ENCODE measurements at regions of chr9 and their contacts with region 1.

Region 1: GRCh38 chr9:35079426-35080341 is at the start of gene FANCG:
- DNase-seq: peak; percentile 73 to 79 (median 77)
- H3K4me3 ChIP-seq: peak within 1 kb of the TSS; percentile 91 to 95
- H3K4me3 Mint-ChIP-seq: peak within 1 kb of the TSS; percentile 92 to 97 (median 96)
- H3K27ac ChIP-seq: peak within 1 kb of the TSS; percentile 66
- H3K27ac Mint-ChIP-seq: peak within 1 kb of the TSS; percentile 83 to 95 (median 92)
- H3K4me1 ChIP-seq: peaks cover 14% of the 10 kb centered on the region
- H3K4me1 Mint-ChIP-seq: peaks cover 15 to 41% (median 19%) of the 10 kb centered on the region in 4 donors
- H3K27me3 ChIP-seq: no peaks in the 10 kb centered on the region
- H3K27me3 Mint-ChIP-seq: no peaks in the 10 kb centered on the region
- total RNA-seq, gene FANCG: 24.0 to 27.9 TPM

Region 2: DNA sequence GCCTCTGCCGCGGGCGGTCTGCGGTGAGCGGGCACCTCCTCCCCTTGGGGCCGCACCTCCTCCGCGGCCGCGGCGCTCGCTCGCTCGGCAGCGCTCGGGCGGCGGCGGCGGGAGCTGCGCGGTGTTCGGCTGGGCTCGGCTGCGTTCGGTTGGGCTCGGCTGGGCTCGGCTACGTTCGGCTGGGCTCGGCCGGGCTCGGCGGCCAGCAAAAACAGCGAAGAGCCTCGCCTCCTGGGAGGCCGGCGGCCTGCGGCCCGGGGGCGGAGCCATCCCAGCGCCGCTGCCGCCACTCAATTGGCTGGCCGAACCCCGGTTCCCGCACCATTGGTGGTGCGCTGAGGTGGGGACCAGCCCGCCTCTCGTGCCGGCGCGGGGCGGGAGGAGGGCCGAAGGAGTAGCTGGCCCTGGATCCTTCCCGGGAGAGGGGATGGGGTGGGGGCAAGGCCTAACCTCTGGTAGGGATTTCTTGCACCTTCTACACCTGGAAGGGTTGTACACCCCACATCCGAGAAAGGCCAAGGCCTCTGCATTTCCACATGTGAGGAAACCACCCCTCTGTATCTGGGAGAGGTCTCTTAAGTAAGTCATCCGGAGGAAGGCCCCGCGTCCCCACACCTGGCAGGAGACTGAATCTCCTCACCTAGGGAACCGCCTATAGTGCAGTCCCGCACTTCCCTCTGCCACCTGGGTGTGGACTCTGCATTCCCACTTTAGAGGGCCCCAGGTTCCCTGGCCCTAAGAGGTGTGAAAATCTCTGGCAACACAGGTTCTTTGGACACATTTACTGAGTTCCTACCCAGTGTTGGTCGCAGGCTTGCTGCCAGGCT is 556.5 kb before region 1 on chr9 and contains the start of gene ENHO:
- CTCF ChIA-PET with region 1: no interaction called
- POLR2A ChIA-PET with region 1: no interaction called
- intact Hi-C with region 1: no loop called
- DNase-seq: peak; percentile 85 to 96 (median 91)
- H3K4me3 ChIP-seq: peak within 1 kb of the TSS; percentile 29 to 58
- H3K4me3 Mint-ChIP-seq: peak within 1 kb of the TSS; percentile 54 to 89 (median 81)
- H3K27ac ChIP-seq: peak within 1 kb of the TSS; percentile 44
- H3K27ac Mint-ChIP-seq: peak within 1 kb of the TSS in 5 of 7 donors; percentile 50 to 85 (median 68)
- H3K4me1 ChIP-seq: peaks cover 12% of the 10 kb centered on the region
- H3K4me1 Mint-ChIP-seq: peaks cover 6 to 13% (median 8%) of the 10 kb centered on the region in 4 donors
- H3K27me3 ChIP-seq: no peaks in the 10 kb centered on the region
- H3K27me3 Mint-ChIP-seq: peaks cover 1 to 5% of the 10 kb centered on the region in 2 donors
- total RNA-seq, gene ENHO: not detected

Region 3: GRCh38 chr9:35051069-35051967 is 28.4 kb before region 1 on chr9:
- CTCF ChIA-PET with region 1: interaction called, 17 read pairs
- POLR2A ChIA-PET with region 1: interaction called, 3 read pairs
- intact Hi-C with region 1: no loop called
- DNase-seq: peak; percentile 28 to 51 (median 36)
- H3K4me3 ChIP-seq: no peak overlapping the region
- H3K4me3 Mint-ChIP-seq: no peak overlapping the region
- H3K27ac ChIP-seq: no peak overlapping the region
- H3K27ac Mint-ChIP-seq: no peak overlapping the region
- H3K4me1 ChIP-seq: no peaks in the 10 kb centered on the region
- H3K4me1 Mint-ChIP-seq: peaks cover 0 to 13% (median 5%) of the 10 kb centered on the region in 4 donors
- H3K27me3 ChIP-seq: no peaks in the 10 kb centered on the region
- H3K27me3 Mint-ChIP-seq: no peaks in the 10 kb centered on the region

Region 4: DNA sequence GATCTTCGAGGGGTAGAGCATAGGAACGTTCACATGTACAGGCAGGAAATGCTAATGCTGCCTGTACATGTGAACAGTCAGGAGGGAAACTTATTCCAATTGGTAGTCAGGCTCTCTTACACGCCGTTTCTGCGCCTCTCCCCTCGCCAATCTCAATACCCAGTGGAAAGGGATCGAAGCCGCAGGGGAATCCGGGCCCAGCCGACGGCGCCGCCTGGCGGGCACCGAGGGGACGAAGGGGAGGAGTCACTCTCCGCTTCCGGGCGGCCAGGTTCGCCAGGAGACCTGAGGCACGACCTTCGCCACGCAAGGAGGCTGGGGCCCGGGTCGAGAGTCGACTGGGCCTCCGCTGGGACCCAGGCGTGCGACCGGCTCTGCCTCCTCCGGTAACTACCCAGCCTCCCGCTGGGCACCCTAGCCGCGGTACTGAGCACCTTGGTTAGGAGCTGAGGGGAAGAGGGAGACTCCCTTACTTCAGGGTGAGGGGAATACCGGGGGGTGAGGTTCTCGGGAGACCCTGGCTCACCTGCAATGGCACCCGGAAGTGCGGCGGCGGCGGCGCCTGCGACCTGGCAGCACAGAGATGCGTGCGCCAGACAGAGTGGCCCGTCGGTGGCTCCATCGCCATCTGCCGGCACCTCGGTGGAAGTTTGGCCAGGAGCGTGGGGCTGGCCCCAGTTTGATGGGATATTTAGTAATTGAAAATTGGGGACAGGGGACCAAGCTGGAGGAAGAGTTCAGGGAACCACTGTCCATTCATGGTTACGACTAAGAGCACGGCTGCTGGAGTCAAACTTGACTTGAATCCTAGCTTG is 16.6 kb after region 1 on chr9 and contains the start of gene PIGO:
- CTCF ChIA-PET with region 1: interaction called, 111 read pairs
- POLR2A ChIA-PET with region 1: interaction called, 102 read pairs
- intact Hi-C with region 1: loop called (anchors 1 kb)
- DNase-seq: peak; percentile 89 to 92 (median 92)
- H3K4me3 ChIP-seq: peak within 1 kb of the TSS; percentile 87
- H3K4me3 Mint-ChIP-seq: peak within 1 kb of the TSS; percentile 85 to 91 (median 86)
- H3K27ac ChIP-seq: peak within 1 kb of the TSS; percentile 92
- H3K27ac Mint-ChIP-seq: peak within 1 kb of the TSS; percentile 91 to 99 (median 94)
- H3K4me1 ChIP-seq: peaks cover 15% of the 10 kb centered on the region
- H3K4me1 Mint-ChIP-seq: peaks cover 17 to 60% (median 34%) of the 10 kb centered on the region in 4 donors
- H3K27me3 ChIP-seq: no peaks in the 10 kb centered on the region
- H3K27me3 Mint-ChIP-seq: no peaks in the 10 kb centered on the region
- total RNA-seq, gene PIGO: 23.4 to 29.7 TPM

Region 5: DNA sequence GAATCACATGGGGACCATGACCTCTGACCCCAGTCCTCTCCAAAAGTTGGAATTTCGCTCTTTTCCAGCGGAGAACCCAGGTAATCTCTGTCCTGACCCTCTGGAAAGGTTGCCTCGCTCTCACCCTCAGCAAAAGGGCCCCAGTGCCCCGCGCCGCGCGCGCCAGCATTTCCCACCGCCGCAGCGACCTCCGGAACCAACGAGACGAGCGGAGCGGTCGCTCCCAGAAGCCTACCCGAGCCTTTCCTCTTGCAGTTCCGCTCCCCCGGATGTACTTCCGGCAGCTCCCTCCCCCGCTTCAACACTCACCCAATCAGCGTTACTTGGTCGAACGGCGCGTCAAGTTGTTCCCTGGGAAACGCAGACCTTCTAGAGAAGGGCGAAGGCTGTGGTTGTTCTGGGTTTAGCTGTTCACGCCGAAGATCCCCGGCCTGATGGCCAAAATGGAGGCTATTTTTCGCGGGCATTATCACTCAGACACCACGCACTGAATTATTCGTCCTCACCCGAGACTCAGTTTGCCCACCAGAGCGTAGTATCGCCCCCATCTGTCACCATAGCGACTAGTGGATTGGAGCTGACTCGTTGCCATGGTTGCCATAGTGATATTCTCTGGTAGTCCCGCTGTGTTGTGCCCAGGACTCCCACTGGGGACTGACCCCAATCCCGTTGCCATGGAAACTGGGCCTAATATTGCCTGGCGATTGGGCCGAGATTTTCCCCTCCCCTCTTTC is 23.4 kb after region 1 on chr9 and contains the start of gene STOML2:
- CTCF ChIA-PET with region 1: interaction called, 111 read pairs
- POLR2A ChIA-PET with region 1: interaction called, 38 read pairs
- intact Hi-C with region 1: loop called (anchors 1 kb)
- DNase-seq: peak; percentile 91 to 96 (median 93)
- H3K4me3 ChIP-seq: peak within 1 kb of the TSS; percentile 83 to 96
- H3K4me3 Mint-ChIP-seq: peak within 1 kb of the TSS; percentile 90 to 98 (median 94)
- H3K27ac ChIP-seq: peak within 1 kb of the TSS; percentile 95
- H3K27ac Mint-ChIP-seq: peak within 1 kb of the TSS; percentile 97 to 100 (median 99)
- H3K4me1 ChIP-seq: peaks cover 23% of the 10 kb centered on the region
- H3K4me1 Mint-ChIP-seq: peaks cover 19 to 46% (median 30%) of the 10 kb centered on the region in 4 donors
- H3K27me3 ChIP-seq: no peaks in the 10 kb centered on the region
- H3K27me3 Mint-ChIP-seq: no peaks in the 10 kb centered on the region
- total RNA-seq, gene STOML2: 42.9 to 45.3 TPM

Region 6: DNA sequence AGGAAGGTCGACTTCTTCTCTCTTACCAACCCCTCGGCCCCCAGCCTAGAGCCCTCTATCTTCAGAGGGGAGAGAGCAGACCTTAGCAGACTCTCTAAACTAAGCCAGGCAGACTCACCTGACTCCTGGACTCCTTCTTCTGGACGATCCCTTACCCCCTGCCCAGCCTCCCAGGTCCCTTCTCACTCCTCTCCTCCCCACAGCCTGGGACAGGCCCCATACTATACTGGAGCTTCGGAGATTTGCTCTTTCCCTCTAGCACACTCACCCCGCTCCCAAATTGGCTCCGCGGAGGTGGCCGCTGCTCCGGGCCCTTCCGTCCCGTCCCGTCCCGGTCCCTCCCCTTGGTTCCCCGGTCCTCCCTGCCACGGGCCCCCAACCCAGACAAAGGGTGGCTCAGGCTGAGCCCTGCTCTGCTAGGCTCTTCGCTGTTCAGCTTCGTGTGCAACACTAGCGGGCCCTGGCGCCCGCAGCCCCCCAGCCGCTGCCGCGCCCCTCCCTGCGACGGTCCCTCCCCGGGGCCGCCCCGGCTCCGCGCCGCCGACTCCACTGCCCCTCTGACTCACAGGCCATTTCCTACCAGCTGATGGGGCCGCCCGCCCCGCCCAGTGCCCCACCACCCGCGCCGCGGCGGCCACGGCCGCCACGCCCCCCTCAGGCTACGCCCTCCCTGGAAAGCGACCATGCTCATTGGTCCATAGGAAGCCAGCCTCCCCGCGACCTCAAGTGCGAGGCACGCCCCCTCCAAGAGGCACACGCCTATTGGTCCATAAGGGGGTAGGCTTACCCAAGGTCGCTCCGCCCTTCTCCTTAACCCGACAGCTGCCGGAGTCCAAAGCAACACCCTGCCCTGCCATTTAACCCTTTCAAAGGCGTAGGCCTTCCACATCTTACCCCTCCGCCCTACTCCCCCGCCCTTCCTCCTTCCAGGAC is 31.6 kb after region 1 on chr9:
- CTCF ChIA-PET with region 1: interaction called, 5 read pairs
- POLR2A ChIA-PET with region 1: interaction called, 21 read pairs
- intact Hi-C with region 1: loop called (anchors 1 kb)
- DNase-seq: peak; percentile 91 to 98 (median 94)
- H3K4me3 ChIP-seq: peak overlapping the region; percentile 47 to 54
- H3K4me3 Mint-ChIP-seq: peak overlapping the region; percentile 67 to 94 (median 81)
- H3K27ac ChIP-seq: peak overlapping the region; percentile 82
- H3K27ac Mint-ChIP-seq: peak overlapping the region; percentile 88 to 96 (median 91)
- H3K4me1 ChIP-seq: peaks cover 52% of the 10 kb centered on the region
- H3K4me1 Mint-ChIP-seq: peaks cover 41 to 63% (median 47%) of the 10 kb centered on the region in 4 donors
- H3K27me3 ChIP-seq: no peaks in the 10 kb centered on the region
- H3K27me3 Mint-ChIP-seq: no peaks in the 10 kb centered on the region

Region 7: GRCh38 chr9:35161713-35162604 is 82.3 kb after region 1 on chr9 and contains the start of gene UNC13B:
- CTCF ChIA-PET with region 1: no interaction called
- POLR2A ChIA-PET with region 1: interaction called, 10 read pairs
- intact Hi-C with region 1: no loop called
- DNase-seq: peak; percentile 58 to 73 (median 65)
- H3K4me3 ChIP-seq: peak within 1 kb of the TSS; percentile 50 to 73
- H3K4me3 Mint-ChIP-seq: peak within 1 kb of the TSS; percentile 88 to 96 (median 94)
- H3K27ac ChIP-seq: peak within 1 kb of the TSS; percentile 20
- H3K27ac Mint-ChIP-seq: peak within 1 kb of the TSS; percentile 53 to 88 (median 78)
- H3K4me1 ChIP-seq: peaks cover 17% of the 10 kb centered on the region
- H3K4me1 Mint-ChIP-seq: peaks cover 11 to 32% (median 18%) of the 10 kb centered on the region in 4 donors
- H3K27me3 ChIP-seq: no peaks in the 10 kb centered on the region
- H3K27me3 Mint-ChIP-seq: no peaks in the 10 kb centered on the region
- total RNA-seq, gene UNC13B: 0.94 to 1.6 TPM

Region 8: DNA sequence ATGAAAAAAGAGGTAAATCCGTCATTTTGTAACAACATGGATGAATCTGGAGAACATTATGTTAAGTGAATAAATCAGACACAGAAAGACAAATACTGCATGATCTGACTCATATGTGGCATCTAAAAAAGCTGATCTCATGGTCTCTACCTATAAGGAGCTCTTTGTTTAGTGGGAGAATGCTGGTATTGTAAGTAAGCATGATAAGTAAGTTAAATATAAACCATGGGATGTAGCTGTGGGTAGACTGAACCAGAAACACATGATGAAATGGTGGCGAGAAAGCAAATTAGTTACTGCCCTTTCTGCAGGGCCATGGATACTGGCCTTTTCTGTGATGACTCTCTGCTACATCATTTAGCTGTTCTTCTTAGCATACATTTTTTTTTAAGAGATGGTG is 343.8 kb after region 1 on chr9:
- CTCF ChIA-PET with region 1: no interaction called
- POLR2A ChIA-PET with region 1: no interaction called
- intact Hi-C with region 1: no loop called
- DNase-seq: no peak
- H3K4me3 ChIP-seq: no peak overlapping the region
- H3K4me3 Mint-ChIP-seq: no peak overlapping the region
- H3K27ac ChIP-seq: no peak overlapping the region
- H3K27ac Mint-ChIP-seq: no peak overlapping the region
- H3K4me1 ChIP-seq: no peaks in the 10 kb centered on the region
- H3K4me1 Mint-ChIP-seq: no peaks in the 10 kb centered on the region
- H3K27me3 ChIP-seq: no peaks in the 10 kb centered on the region
- H3K27me3 Mint-ChIP-seq: peaks cover 26 to 33% of the 10 kb centered on the region in 2 donors